ENCODE measurements at regions of chr10 and their contacts with region 1.

Region 1: GRCh38 chr10:20635570-20635969 is 261.5 kb downstream of the NEBL start:
- DNase-seq: no peak

Region 2: GRCh38 chr10:20267734-20268133 is 367.8 kb before region 1 on chr10:
- intact Hi-C with region 1: loop called in 1 of 2 experiments (anchors 2 kb)
- DNase-seq: no peak

Region 3: GRCh38 chr10:20573924-20574323 is 61.6 kb before region 1 on chr10:
- intact Hi-C with region 1: no loop called
- DNase-seq: no peak

Region 4: DNA sequence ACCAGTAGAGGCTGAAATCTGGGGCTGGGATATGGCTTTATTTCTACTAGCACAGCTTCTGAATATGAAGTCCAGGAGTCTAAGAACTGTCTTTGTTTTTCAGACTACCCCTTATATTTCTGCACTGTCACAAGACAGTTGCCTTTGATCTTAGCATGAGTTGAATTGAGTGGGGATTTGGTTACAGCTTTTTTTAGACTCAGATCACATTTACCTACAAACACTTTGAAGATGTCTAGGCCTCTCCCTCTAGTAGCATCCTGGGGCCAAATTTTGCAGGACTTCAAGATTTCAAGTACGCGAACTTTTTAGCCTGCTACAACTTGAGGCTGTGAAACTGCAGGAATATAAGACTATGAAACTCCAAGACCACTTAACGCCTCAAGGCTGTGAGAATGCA is 21.3 kb after region 1 on chr10:
- intact Hi-C with region 1: no loop called
- DNase-seq: no peak

Measured in posterior vena cava (tissue), 2 donors.